Activated CD8-positive, alpha-beta T cell treated with anti-CD3 and anti-CD28 coated beads for 36 hours (primary cell): ENCODE measurements at regions of chr2 and their contacts with region 1.

Region 1: GRCh38 chr2:24107-24506 is 22.2 kb downstream of the FAM110C start:
- DNase-seq: no peak
- ATAC-seq: no peak
- H3K4me3 Mint-ChIP-seq: no peak overlapping the region
- H3K27ac Mint-ChIP-seq: no peak overlapping the region
- H3K4me1 Mint-ChIP-seq: peaks cover 19% of the 10 kb centered on the region
- H3K27me3 Mint-ChIP-seq: no peaks in the 10 kb centered on the region
- CTCF ChIP-seq: no peak

Region 2: GRCh38 chr2:11248-11941 is 12.7 kb before region 1 on chr2:
- CTCF ChIA-PET with region 1: interaction called, 13 read pairs
- POLR2A ChIA-PET with region 1: no interaction called
- intact Hi-C with region 1: no loop called
- DNase-seq: peak; percentile 87
- ATAC-seq: peak; percentile 90
- H3K4me3 Mint-ChIP-seq: no peak overlapping the region
- H3K27ac Mint-ChIP-seq: no peak overlapping the region
- H3K4me1 Mint-ChIP-seq: peaks cover 3% of the 10 kb centered on the region
- H3K27me3 Mint-ChIP-seq: peaks cover 11% of the 10 kb centered on the region
- CTCF ChIP-seq: peak; percentile 90

Region 3: DNA sequence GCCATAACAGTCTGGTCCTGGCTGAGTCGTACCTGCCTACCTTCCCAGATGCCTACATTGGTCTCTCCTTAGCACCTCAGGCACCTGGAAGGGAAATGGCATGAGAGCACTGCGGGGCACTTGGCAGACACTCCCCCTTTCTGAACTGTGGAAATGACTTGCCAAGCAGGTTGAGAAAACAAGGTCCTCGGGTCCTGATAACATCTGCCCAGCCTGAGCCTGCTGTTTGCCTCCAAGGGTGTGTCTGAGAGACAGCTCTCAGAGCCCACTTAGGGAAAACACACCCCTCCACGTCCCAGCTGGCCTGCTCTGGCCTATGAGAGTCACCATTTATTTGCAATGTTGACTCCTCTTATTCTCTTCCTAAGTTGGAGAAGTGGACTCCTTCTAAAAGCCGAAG is 11.7 kb after region 1 on chr2:
- CTCF ChIA-PET with region 1: no interaction called
- POLR2A ChIA-PET with region 1: no interaction called
- intact Hi-C with region 1: no loop called
- DNase-seq: no peak
- ATAC-seq: no peak
- H3K4me3 Mint-ChIP-seq: no peak overlapping the region
- H3K27ac Mint-ChIP-seq: no peak overlapping the region
- H3K4me1 Mint-ChIP-seq: peaks cover 23% of the 10 kb centered on the region
- H3K27me3 Mint-ChIP-seq: peaks cover 8% of the 10 kb centered on the region
- CTCF ChIP-seq: no peak